PC-9 (cell line): ENCODE measurements at regions of chr17 and their contacts with region 1.

Region 1: DNA sequence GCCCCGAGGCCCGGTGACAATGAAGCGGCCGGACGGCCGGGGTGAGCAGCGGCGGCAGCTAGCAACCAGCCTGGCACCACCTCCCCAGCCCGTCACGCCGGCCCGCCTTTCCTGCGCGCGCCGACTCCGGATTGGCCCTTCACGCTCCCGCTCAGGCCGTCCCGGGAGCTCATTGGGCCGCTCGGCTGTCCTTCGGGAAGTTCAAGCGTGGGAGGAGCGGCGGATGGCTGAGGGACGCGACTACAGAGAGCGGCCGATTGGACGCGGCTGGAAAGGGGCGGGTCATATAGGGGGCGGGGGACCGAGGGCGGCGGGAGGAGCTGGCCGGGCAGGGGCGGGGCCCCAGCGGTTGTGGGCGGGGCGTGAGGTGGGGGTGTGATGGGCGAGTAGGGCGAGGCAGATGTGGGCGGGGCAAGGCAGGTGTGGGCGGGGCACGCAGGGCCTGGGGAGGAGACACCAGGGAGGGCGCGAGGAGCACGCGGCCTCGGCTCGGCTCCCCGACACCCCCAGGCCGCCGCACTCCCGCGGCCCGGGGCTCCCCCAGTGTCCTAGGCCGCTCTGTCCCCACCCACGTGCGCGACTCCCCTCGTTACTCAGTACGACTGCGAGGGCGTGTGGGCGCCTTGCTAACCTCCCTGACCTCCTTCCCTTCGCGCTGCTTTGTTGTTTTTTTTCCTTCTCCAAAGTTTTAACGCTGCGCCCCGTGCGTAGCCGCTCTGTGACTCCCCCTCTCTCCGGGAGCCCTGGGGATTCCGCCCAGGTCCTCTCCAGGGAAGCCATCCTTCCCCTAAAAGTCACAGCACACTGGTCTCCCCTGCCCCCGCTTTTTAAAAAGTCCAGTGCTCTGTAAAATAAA is at the start of gene CEP131:
- DNase-seq: peak; percentile 87 to 100
- H3K4me3 ChIP-seq: peak within 1 kb of the TSS; percentile 81
- H3K27ac ChIP-seq: no peak within 1 kb of the TSS
- H3K4me1 ChIP-seq: 0 out of 2 replicates have a peak, but pooled peaks cover 9% of the 10 kb centered on the region
- H3K27me3 ChIP-seq: no peaks in the 10 kb centered on the region
- CTCF ChIP-seq: no peak
- total RNA-seq, gene CEP131: 24.4 and 33.4 TPM in 2 replicates

Region 2: DNA sequence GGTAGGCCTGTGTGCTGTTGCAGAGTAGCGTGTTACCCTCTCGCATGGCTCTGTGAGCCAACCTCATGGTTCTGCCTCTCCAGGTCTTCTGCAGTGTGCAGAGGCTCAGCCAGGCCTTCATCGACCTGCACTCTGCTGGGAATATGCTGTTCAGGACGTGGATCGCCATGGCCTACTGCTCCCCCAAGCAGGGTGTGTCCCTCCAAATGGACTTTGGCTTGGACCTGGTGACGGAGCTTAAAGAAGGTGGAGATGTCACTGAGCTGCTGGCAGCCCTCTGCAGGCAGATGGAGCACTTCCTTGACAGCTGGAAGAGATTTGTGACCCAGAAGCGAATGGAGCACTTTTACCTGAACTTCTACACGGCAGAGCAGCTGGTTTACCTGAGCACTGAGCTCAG is 884.0 kb before region 1 on chr17:
- CTCF ChIA-PET with region 1: interaction called, 12 read pairs
- POLR2A ChIA-PET with region 1: no interaction called
- intact Hi-C with region 1: no loop called
- DNase-seq: no peak
- H3K4me3 ChIP-seq: no peak overlapping the region
- H3K27ac ChIP-seq: no peak overlapping the region
- H3K4me1 ChIP-seq: no peaks in the 10 kb centered on the region
- H3K27me3 ChIP-seq: no peaks in the 10 kb centered on the region
- CTCF ChIP-seq: no peak

Region 3: DNA sequence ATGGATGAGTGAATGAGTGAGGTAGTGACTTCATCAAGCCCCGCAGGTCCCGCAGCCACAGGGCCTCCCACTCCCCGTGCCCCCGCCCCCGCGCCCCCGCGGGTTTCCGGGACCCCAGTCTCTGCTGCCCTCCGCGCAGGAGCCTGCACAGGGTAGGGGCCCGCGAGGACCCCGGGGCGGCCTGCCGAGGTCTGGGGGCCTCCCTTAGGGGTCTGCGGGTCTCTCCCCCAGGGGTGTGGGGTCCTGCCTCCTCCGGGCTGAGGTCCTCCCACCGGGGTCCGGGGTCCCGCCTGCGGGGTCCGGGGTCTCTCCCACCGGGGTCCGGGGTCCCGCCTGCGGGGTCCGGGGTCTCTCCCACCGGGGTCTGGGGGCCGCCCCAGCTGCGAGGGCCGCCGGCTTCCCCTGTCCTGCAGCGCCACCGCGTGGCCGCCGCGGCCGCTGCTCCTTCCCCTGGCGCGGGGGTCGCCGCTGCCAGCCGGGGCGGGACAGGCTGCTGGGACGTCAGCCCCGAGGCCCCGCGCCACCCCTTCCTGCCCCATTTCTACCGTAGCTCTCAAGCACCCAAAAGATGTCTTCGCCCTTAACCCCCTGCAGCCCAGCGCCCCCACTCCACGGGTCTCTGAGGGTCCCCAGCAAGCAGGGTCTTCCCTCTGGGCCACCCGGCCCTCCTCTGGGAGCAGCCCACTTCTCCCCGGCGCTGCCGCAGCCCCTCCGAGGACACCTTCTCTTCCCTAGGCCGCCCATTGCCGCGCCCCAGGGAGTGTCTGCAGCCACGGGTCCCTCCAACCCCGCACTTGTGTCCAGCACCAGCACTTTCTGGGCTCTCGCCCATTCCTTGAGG is 241.9 kb before region 1 on chr17:
- CTCF ChIA-PET with region 1: no interaction called
- POLR2A ChIA-PET with region 1: no interaction called
- intact Hi-C with region 1: loop called (anchors 5 kb)
- DNase-seq: no peak
- H3K4me3 ChIP-seq: no peak overlapping the region
- H3K27ac ChIP-seq: no peak overlapping the region
- H3K4me1 ChIP-seq: no peaks in the 10 kb centered on the region
- H3K27me3 ChIP-seq: no peaks in the 10 kb centered on the region
- CTCF ChIP-seq: peak; percentile 71

Region 4: GRCh38 chr17:81002409-81003361 is 220.4 kb before region 1 on chr17:
- CTCF ChIA-PET with region 1: no interaction called
- POLR2A ChIA-PET with region 1: no interaction called
- intact Hi-C with region 1: loop called (anchors 5 kb)
- DNase-seq: peak in 1 of 2 experiments; percentile 45
- H3K4me3 ChIP-seq: no peak overlapping the region
- H3K27ac ChIP-seq: no peak overlapping the region
- H3K4me1 ChIP-seq: no peaks in the 10 kb centered on the region
- H3K27me3 ChIP-seq: no peaks in the 10 kb centered on the region
- CTCF ChIP-seq: no peak

Region 5: DNA sequence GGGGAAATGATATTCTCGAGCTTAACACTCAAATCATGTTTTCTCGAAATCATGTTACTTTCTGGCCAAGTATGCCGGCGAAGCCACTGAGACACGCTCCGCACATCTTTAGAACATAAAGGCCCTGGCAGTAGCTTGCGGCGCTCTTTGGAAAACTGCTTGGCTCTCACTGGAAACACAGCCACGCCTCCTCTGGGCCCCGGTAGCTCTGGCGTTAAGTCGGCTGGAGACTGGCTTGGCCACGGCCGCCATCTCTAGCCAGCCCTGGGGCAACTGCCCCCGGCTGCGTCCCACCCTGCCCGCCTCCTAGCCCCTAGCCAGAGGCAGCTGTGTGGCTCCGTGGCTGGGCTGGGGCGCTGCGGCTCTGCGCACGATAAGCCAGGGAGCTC is 197.4 kb before region 1 on chr17:
- CTCF ChIA-PET with region 1: no interaction called
- POLR2A ChIA-PET with region 1: interaction called, 30 read pairs
- intact Hi-C with region 1: no loop called
- DNase-seq: no peak
- H3K4me3 ChIP-seq: no peak overlapping the region
- H3K27ac ChIP-seq: no peak overlapping the region
- H3K4me1 ChIP-seq: no peaks in the 10 kb centered on the region
- H3K27me3 ChIP-seq: no peaks in the 10 kb centered on the region
- CTCF ChIP-seq: no peak

Region 6: DNA sequence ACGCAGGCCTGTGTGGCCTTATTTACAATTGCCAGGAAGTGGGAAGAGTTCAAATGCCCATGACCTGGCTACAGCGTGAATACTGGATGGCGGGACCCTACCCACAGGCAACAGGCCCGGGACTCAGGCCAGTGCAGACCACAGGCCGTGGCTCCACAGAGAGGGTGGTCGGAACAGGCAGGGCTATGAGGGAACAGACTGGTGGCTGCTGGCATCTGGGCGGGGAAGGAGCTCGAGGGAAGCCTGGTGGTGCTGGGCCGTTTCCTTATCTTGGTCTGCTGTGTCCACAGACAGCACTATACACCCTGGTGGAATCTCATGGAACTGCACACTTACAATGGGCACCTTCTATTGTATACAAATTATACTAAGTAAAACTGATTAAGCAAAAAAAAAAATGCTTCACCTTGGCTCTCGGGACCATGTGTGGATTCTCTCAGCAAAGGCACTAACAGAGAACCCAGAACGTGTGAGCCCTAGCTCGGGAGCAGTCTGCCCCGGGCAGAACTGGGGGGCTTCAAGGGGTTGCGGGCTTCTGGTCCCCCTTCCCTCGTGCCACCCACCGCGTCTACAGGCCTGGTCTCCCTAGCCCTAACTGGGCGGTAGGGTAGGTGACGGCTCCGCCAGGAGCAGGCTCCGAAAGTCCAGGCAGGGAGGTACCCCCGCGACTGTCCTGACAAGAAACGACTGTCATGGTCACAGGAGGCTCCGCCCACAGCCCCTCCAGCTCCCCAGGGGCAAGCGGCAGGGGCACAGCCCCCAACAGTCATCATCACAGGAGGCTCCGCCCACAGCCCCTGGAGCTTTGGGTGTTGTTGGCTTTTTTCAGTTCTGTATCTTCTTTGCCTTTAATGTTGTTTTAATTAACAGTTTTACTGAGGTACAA is 22.2 kb before region 1 on chr17:
- CTCF ChIA-PET with region 1: interaction called, 11 read pairs
- POLR2A ChIA-PET with region 1: no interaction called
- intact Hi-C with region 1: no loop called
- DNase-seq: peak; percentile 45 to 53
- H3K4me3 ChIP-seq: no peak overlapping the region
- H3K27ac ChIP-seq: no peak overlapping the region
- H3K4me1 ChIP-seq: no peaks in the 10 kb centered on the region
- H3K27me3 ChIP-seq: no peaks in the 10 kb centered on the region
- CTCF ChIP-seq: peak; percentile 66

Region 7: GRCh38 chr17:81212365-81212764 is 10.8 kb before region 1 on chr17:
- CTCF ChIA-PET with region 1: no interaction called
- POLR2A ChIA-PET with region 1: no interaction called
- intact Hi-C with region 1: no loop called
- DNase-seq: no peak
- H3K4me3 ChIP-seq: no peak overlapping the region
- H3K27ac ChIP-seq: no peak overlapping the region
- H3K4me1 ChIP-seq: no peaks in the 10 kb centered on the region
- H3K27me3 ChIP-seq: no peaks in the 10 kb centered on the region
- CTCF ChIP-seq: no peak